PC-9 (cell line): ENCODE measurements at regions of chr4 and their contacts with region 1.

Region 1: DNA sequence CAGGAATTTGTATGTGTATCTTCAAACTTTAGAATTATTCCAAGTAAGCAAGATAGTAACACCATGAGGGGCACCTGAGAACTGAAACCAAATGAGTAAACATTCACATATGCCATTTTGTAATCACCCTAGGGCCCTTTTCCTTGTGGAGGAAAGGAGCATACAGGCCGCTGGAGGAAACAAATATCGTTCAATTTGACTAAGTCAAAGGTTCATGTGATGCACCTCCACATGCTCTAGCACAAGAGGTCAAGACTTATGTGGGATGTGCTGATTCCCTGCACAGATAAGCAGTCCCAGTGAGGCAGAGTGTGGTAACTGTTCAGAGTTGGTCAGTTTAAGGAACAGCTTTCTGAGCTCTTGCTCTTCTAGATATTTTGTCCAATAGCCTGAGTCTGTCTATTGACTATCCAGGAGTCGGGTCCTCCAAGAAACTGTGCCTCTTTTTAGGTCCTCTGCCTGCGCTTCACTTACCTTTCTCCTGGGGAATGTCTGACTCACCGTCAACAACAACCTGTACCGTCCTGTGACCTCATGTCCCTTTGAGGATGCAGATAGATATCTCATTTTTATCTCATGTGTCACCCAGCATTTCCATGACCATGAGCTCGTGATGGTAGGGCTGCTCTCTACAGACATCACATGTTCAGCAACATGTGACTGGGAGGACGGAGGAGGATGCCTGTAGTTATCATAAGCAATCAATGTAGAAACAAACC is 196.9 kb downstream of the NWD2 start:
- DNase-seq: peak; percentile 64 to 96
- H3K4me3 ChIP-seq: no peak overlapping the region; the same call in 1 of the 2 replicates
- H3K27ac ChIP-seq: peak overlapping the region; percentile 78
- H3K4me1 ChIP-seq: peaks cover 47% of the 10 kb centered on the region
- H3K27me3 ChIP-seq: no peaks in the 10 kb centered on the region
- CTCF ChIP-seq: no peak

Region 2: GRCh38 chr4:36835246-36835645 is 606.2 kb before region 1 on chr4:
- CTCF ChIA-PET with region 1: no interaction called
- POLR2A ChIA-PET with region 1: no interaction called
- intact Hi-C with region 1: no loop called
- DNase-seq: no peak
- H3K4me3 ChIP-seq: no peak overlapping the region
- H3K27ac ChIP-seq: no peak overlapping the region
- H3K4me1 ChIP-seq: no peaks in the 10 kb centered on the region
- H3K27me3 ChIP-seq: no peaks in the 10 kb centered on the region
- CTCF ChIP-seq: no peak

Region 3: DNA sequence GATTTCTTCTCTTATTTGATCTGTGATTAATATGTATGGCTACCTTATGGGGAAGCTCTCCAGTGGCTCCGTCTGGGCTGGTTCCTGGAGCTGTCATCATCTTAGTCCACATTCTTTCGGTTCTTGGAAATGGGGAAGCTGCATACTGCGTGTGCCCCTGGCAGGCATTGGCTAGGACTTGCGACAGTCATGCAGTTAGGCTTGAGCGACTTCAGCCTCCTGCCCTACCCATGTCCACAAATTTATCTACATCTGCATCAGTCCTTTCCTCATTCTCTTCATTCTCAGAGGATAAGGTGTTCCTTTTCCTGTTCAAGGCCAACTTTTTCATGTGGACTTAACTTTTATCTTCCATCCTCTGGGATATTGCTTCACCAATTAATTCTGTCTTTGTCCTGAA is 30.5 kb after region 1 on chr4:
- CTCF ChIA-PET with region 1: no interaction called
- POLR2A ChIA-PET with region 1: interaction called, 3 read pairs
- intact Hi-C with region 1: loop called (anchors 1 kb)
- DNase-seq: peak; percentile 79 to 95
- H3K4me3 ChIP-seq: no peak overlapping the region; the same call in 1 of the 2 replicates
- H3K27ac ChIP-seq: peak overlapping the region; percentile 65
- H3K4me1 ChIP-seq: peaks cover 34% of the 10 kb centered on the region
- H3K27me3 ChIP-seq: no peaks in the 10 kb centered on the region
- CTCF ChIP-seq: no peak